ENCODE measurements at regions of chr7 and their contacts with region 1.

Region 1: DNA sequence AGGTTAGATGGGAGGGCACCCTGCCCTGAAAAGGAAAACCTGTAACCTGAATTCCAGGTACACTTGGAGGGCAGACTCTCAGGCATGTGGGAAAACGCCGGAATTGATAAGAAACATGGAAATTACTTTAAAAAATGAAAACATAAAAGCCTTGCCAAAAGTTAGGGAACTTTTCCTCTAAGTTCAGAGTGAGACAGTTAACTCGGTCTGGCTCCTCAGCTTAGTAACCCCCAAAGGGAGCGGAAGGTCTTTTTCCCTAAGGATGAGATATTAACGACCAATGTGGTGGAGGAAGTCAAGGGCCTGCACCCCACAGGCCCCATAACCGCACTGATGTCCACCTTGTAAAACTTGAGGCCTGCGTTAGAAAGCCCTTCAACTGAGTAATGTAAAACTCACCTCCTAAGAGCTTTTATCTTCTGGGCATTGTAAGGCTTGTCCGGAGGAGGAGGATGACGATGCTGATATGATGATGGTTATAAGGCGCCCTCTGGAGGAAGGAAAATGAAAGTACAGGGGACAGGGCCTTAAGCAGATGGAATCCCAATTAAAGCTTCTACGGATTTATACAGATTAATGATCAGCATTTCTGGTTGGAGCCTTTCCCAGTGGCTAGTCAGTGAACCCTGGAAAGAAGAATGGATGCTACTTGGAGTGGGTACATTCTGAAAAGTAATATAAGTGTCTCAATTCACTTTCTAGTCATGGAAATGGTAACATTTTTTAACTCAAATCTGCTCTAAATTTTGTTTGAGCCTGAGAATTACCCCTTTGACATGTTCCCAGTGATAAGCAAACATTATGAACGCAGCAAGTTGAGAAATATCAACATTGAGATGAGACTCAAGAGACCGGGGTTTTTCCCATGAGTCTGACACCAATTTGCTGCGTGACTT is 694 bp downstream of the COL1A2 start:
- DNase-seq: no peak

Region 2: DNA sequence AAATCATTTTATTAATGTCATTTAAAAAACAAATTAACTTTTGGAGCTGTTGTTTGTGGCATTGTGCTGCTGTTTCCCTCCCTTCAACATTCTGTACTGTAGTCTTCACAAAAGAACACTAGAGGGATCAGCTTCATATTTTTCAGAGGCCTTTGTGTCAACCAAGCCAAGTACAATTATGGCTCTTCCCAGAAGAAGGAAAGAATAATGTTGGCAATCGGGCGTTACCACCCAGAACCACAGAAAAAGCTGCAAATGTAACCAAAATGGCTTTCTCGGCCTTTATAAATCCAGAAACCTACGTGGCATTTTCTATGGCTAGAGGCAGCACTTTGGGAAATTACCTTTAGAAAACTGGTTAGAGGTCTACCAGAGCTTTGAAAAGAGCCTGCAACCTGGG is 99.5 kb before region 1 on chr7:
- intact Hi-C with region 1: loop called in 1 of 2 experiments (anchors 2 kb)
- DNase-seq: no peak

Region 3: DNA sequence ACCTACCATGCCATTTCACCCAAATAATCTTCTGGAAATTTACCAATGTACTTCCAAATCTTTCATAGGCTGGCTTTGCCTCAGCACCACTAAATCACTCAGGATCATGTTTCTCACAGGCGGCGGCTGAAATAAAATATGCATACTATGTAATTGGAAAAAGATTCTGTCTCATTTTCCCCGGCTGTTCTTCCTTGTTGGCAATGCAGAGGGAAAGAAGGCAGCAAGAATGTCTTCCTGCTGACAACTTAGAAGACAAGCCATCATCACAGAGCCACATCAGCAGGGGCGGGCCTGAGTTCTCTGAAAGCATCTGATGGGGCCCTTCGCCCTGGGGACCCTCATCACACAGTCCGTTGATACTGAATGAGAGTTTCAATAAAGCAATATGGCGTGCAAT is 39.9 kb before region 1 on chr7:
- intact Hi-C with region 1: loop called in 1 of 2 experiments (anchors 5 kb)
- DNase-seq: no peak

Region 4: GRCh38 chr7:94431619-94432280 is 36.4 kb after region 1 on chr7:
- intact Hi-C with region 1: loop called in 1 of 2 experiments (anchors 5 kb)
- DNase-seq: no peak

Measured in posterior vena cava (tissue), 2 donors.